ENCODE measurements at regions of chr7 and their contacts with region 1.

Region 1: GRCh38 chr7:83020161-83020560 is 142.5 kb downstream of the PCLO start:
- DNase-seq: no peak
- ATAC-seq: no peak
- H3K4me3 ChIP-seq: no peak overlapping the region
- H3K4me3 Mint-ChIP-seq: no peak overlapping the region
- H3K27ac ChIP-seq: no peak overlapping the region
- H3K27ac Mint-ChIP-seq: no peak overlapping the region
- H3K4me1 ChIP-seq: no peaks in the 10 kb centered on the region
- H3K4me1 Mint-ChIP-seq: no peaks in the 10 kb centered on the region
- H3K27me3 ChIP-seq: no peaks in the 10 kb centered on the region
- H3K27me3 Mint-ChIP-seq: no peaks in the 10 kb centered on the region
- CTCF ChIP-seq: no peak

Region 2: GRCh38 chr7:83032195-83032594 is 12.0 kb after region 1 on chr7:
- CTCF ChIA-PET with region 1: no interaction called
- POLR2A ChIA-PET with region 1: no interaction called
- intact Hi-C with region 1: loop called in 1 of 2 experiments (anchors 1 kb)
- DNase-seq: no peak
- ATAC-seq: no peak
- H3K4me3 ChIP-seq: no peak overlapping the region
- H3K4me3 Mint-ChIP-seq: no peak overlapping the region
- H3K27ac ChIP-seq: no peak overlapping the region
- H3K27ac Mint-ChIP-seq: no peak overlapping the region
- H3K4me1 ChIP-seq: no peaks in the 10 kb centered on the region
- H3K4me1 Mint-ChIP-seq: no peaks in the 10 kb centered on the region
- H3K27me3 ChIP-seq: no peaks in the 10 kb centered on the region
- H3K27me3 Mint-ChIP-seq: no peaks in the 10 kb centered on the region
- CTCF ChIP-seq: no peak